Activated CD8-positive, alpha-beta T cell treated with anti-CD3 and anti-CD28 coated beads for 36 hours (primary cell): ENCODE measurements at regions of chr3 and their contacts with region 1.

Region 1: DNA sequence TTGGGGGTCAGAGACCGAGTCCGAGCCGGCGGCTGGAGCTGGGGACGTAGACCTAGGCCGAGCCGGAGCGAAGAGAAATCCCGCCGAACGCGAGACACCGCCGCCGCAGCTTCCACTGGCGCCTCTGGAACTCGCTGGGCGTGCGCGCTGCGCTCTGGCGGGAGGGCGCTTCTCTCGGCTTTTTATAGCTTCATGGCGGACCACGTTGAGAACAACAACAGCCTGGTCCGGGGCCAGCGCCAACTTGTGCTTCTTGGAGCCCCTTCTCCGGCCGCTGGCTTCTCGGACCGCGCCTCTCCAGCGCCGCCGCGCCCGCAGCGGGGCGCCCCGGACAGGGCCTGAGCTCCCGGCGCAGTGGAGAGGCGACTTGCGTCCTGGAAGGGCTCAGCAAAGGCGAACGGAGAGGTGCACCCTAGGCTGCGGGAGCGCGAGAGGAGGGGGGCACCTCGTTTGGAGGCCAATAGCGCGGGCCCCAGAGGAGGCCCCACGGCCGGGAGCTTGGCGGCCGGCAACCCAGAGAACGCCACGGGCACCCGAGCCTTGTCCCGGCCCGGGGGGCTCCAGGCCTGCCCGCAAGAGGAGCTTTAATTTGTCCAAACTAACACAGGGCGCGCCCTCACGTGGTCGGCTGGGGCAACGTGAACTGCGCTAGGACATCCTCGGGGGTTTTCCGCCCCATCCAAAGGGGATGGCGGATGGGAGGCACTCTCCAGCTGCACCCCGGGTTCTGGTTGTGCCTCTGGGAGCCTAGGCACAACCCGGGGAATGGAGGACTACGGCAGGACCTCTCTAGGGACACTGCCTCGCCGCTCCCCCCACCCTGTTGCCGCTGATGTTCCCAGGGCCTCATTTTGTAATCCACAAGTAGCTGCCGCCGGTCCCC is 37.7 kb downstream of the HMCES start:
- DNase-seq: peak; percentile 86
- ATAC-seq: peak; percentile 34
- H3K4me3 Mint-ChIP-seq: peak overlapping the region; percentile 80
- H3K27ac Mint-ChIP-seq: peak overlapping the region; percentile 71
- H3K4me1 Mint-ChIP-seq: peaks cover 24% of the 10 kb centered on the region
- H3K27me3 Mint-ChIP-seq: no peaks in the 10 kb centered on the region
- CTCF ChIP-seq: peak; percentile 75

Region 2: DNA sequence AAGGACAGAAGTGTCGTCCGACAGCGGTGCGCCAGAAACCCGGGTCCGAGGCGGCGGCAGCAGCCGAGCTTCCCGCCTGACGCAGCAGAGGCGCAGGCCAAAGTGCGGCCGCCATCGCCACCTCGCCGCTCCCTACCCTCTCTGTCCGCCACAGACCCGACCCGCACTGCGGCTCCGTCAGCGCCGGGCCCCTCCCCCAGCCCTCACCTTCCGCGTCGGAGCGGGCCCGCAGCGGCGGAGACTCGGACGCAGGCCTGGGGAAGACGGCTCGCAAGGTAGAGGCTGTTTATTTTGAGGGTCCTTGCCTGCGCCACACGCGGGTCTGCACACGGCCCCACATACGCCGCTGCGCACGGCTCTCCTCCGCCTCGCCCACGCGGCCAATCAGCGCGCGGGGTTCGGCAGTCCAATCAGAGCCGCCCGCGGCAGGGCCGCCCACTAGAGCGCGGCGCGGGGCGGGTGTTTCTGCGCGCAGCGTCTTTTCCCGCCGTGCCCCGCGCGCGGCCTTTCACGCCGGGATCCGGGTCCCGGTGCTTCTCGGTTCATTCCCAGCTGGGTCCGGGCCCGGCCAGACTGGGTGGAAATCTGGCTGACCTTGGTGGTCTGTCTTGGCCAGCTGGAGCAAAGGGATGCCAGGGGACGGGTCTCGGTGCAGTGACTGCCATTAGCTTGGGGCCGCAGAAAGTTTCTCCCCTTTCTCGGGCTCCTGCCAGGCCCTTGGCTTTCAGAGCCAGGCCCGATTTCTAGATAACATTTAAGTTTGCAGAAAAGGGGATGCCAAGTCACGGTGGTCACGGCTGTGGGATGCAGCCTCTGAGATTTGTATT is 132.6 kb before region 1 on chr3 and contains the start of gene CNBP:
- CTCF ChIA-PET with region 1: no interaction called
- POLR2A ChIA-PET with region 1: interaction called, 20 read pairs
- intact Hi-C with region 1: no loop called
- DNase-seq: peak; percentile 94
- ATAC-seq: peak; percentile 94
- H3K4me3 Mint-ChIP-seq: peak within 1 kb of the TSS; percentile 97
- H3K27ac Mint-ChIP-seq: peak within 1 kb of the TSS; percentile 99
- H3K4me1 Mint-ChIP-seq: peaks cover 29% of the 10 kb centered on the region
- H3K27me3 Mint-ChIP-seq: no peaks in the 10 kb centered on the region
- CTCF ChIP-seq: no peak
- total RNA-seq, gene CNBP: 453 to 454 TPM

Region 3: DNA sequence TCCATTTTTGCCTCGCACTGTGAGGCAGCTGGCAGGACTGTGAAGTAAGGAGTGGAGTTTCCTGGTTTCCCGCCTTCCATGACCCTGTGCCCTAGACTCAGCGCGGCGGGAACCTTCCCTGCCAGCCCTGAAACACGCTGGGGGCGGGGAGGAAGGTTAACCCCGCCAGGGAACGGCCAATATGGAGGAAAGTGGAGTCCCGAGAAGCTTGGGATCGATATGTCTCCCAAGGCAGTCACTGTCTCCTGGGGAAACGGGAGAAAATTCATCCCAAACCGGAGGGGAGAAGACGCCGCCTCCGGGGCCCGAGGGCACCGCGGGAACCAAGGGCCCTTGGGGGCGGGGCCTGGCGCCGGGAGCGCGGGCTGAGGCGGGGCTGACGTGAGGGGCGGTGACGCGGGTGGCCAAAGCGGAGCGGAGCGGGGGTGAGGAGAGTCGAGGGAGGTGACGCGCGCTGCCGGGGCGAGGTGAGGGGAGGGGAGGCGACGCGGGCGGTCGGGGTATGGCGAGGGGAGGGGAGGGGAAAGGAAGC is 37.9 kb before region 1 on chr3 and contains the start of gene HMCES:
- CTCF ChIA-PET with region 1: interaction called, 10 read pairs
- POLR2A ChIA-PET with region 1: interaction called, 108 read pairs
- intact Hi-C with region 1: loop called (anchors 5 kb)
- DNase-seq: peak; percentile 95
- ATAC-seq: peak; percentile 84
- H3K4me3 Mint-ChIP-seq: peak within 1 kb of the TSS; percentile 100
- H3K27ac Mint-ChIP-seq: peak within 1 kb of the TSS; percentile 99
- H3K4me1 Mint-ChIP-seq: peaks cover 50% of the 10 kb centered on the region
- H3K27me3 Mint-ChIP-seq: no peaks in the 10 kb centered on the region
- CTCF ChIP-seq: no peak
- total RNA-seq, gene HMCES: 54.5 to 57.8 TPM

Region 4: GRCh38 chr3:129305592-129306091 is 10.7 kb before region 1 on chr3:
- CTCF ChIA-PET with region 1: interaction called, 3 read pairs
- POLR2A ChIA-PET with region 1: interaction called, 34 read pairs
- intact Hi-C with region 1: no loop called
- DNase-seq: peak; percentile 37
- ATAC-seq: no peak
- H3K4me3 Mint-ChIP-seq: no peak overlapping the region
- H3K27ac Mint-ChIP-seq: no peak overlapping the region
- H3K4me1 Mint-ChIP-seq: peaks cover 37% of the 10 kb centered on the region
- H3K27me3 Mint-ChIP-seq: no peaks in the 10 kb centered on the region
- CTCF ChIP-seq: no peak

Region 5: DNA sequence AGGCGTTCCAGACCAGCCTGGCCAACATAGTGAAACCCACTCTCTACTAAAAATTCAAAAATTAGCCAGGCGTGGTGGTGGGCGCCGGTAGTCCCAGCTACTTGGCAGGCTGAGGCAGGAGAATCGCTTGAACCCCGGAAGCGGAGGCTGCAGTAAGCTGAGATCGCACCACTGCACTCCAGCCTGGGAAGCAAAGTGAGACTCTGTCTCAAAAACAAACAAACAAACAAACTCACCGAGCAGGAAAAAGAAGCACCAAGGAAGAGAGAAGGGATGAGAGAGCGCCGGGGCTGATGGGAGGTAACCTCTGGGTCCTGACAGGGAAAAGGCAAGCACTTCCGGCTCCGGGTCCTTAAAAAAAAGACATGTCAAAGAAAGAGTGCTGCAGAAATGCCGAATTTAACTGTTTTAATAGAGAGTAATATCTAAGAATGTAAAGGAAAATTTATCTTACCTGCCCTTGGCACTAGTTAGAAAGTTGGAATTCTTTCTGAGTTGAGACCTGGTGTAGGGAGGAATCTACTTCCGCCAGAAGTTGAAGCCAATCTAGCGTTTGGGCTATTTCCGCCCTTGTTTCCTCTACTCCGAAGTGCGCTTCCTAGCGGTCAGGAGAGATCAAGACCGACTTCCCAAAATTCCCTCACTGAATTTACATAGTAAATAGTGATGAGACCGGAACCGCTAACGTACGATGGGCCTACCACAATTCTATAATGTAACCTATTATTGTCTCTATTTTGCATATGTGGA is 82.9 kb after region 1 on chr3:
- CTCF ChIA-PET with region 1: interaction called, 3 read pairs
- POLR2A ChIA-PET with region 1: interaction called, 22 read pairs
- intact Hi-C with region 1: no loop called
- DNase-seq: peak; percentile 82
- ATAC-seq: peak; percentile 85
- H3K4me3 Mint-ChIP-seq: peak overlapping the region; percentile 92
- H3K27ac Mint-ChIP-seq: peak overlapping the region; percentile 98
- H3K4me1 Mint-ChIP-seq: peaks cover 33% of the 10 kb centered on the region
- H3K27me3 Mint-ChIP-seq: no peaks in the 10 kb centered on the region
- CTCF ChIP-seq: peak; percentile 77